ENCODE measurements at regions of chr6 and their contacts with region 1.

Region 1: GRCh38 chr6:163814494-163815364 is 400.2 kb downstream of the QKI start:
- DNase-seq: peak; percentile 71 to 83
- ATAC-seq: peak; percentile 93 to 97 (median 96)
- H3K4me3 ChIP-seq: peak overlapping the region; percentile 5
- H3K27ac ChIP-seq: peak overlapping the region; percentile 92
- H3K4me1 ChIP-seq: peaks cover 28% of the 10 kb centered on the region
- H3K27me3 ChIP-seq: no peaks in the 10 kb centered on the region
- CTCF ChIP-seq: peak; percentile 34

Region 2: GRCh38 chr6:163585932-163586437 is 228.7 kb before region 1 on chr6:
- intact Hi-C with region 1: loop called in 1 of 2 experiments (anchors 10 kb)
- DNase-seq: peak; percentile 65 to 86
- ATAC-seq: peak; percentile 81 to 85 (median 84)
- H3K4me3 ChIP-seq: peak overlapping the region; percentile 17
- H3K27ac ChIP-seq: peak overlapping the region; percentile 83
- H3K4me1 ChIP-seq: peaks cover 39% of the 10 kb centered on the region
- H3K27me3 ChIP-seq: no peaks in the 10 kb centered on the region
- CTCF ChIP-seq: no peak

Region 3: GRCh38 chr6:163943607-163944385 is 129.1 kb after region 1 on chr6:
- intact Hi-C with region 1: loop called in 1 of 2 experiments (anchors 10 kb)
- DNase-seq: peak in 1 of 2 donors; percentile 63
- ATAC-seq: peak; percentile 66 to 81 (median 74)
- H3K4me3 ChIP-seq: peak overlapping the region; percentile 21
- H3K27ac ChIP-seq: peak overlapping the region; percentile 41
- H3K4me1 ChIP-seq: peaks cover 19% of the 10 kb centered on the region
- H3K27me3 ChIP-seq: no peaks in the 10 kb centered on the region
- CTCF ChIP-seq: no peak

Measured in psoas muscle (tissue), 8 donors.